ENCODE measurements at regions of chr7 and their contacts with region 1.

Region 1: DNA sequence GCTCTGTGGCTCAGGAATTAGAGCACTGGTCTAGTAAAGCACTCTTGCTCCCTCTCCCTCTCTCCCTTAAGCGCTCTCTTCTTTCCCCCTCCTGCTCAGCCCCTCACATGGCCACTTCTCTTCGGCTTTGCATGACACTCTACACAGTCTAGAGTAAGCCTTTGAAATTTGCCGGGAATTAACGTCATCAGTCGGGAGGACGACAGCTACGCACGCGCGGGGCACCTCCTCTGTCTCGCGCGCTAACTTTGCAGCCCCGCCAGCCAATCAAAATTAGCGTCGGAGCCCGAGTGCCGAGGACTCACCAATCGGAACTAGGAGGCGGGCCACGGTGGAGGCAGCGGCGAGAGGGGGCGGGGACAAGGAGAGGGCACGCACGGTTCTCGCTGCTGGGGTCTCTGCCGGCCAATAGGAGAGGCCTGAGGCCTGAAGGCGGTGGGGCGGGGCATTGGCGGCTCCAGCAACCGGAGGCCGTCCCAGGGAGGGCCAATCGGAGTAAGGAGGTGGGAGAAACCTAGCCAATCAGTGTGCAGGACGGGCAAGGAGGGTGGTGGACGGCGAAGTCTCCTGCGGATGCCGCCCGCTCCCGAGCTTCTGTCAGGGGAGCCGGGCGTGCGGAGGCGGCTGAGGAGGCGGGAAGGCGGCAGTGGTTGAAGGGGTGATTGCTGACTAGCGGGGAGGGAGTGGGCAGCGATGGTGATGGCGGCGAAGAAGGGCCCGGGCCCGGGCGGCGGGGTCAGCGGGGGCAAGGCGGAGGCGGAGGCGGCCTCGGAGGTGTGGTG is at the start of gene AGFG2:
- DNase-seq: peak; percentile 100
- H3K4me3 Mint-ChIP-seq: peak within 1 kb of the TSS; percentile 98
- H3K27ac Mint-ChIP-seq: peak within 1 kb of the TSS; percentile 85
- H3K4me1 Mint-ChIP-seq: peaks cover 44% of the 10 kb centered on the region
- H3K27me3 Mint-ChIP-seq: no peaks in the 10 kb centered on the region
- total RNA-seq, gene AGFG2: 113 and 124 TPM in 2 replicates

Region 2: GRCh38 chr7:100509231-100509630 is 29.6 kb before region 1 on chr7:
- intact Hi-C with region 1: no loop called
- DNase-seq: no peak
- H3K4me3 Mint-ChIP-seq: no peak overlapping the region
- H3K27ac Mint-ChIP-seq: no peak overlapping the region
- H3K4me1 Mint-ChIP-seq: no peaks in the 10 kb centered on the region
- H3K27me3 Mint-ChIP-seq: peaks cover 6% of the 10 kb centered on the region

Region 3: GRCh38 chr7:100604028-100604975 is 65.5 kb after region 1 on chr7:
- intact Hi-C with region 1: loop called (anchors 1 kb)
- DNase-seq: peak; percentile 61
- H3K4me3 Mint-ChIP-seq: peak overlapping the region; percentile 81
- H3K27ac Mint-ChIP-seq: peak overlapping the region; percentile 84
- H3K4me1 Mint-ChIP-seq: peaks cover 15% of the 10 kb centered on the region
- H3K27me3 Mint-ChIP-seq: peaks cover 13% of the 10 kb centered on the region

Measured in activated T-helper 1 cell treated with anti-CD3 and anti-CD28 coated beads, Interleukin-12 subunit alpha, Interleukin-12 subunit beta, Interleukin-2, Interleukin-4 antibody, amounts not matched to agents 30 ng/mL and 10 ng/mL and 1 ng/mL, durations not matched to agents 14 hours and 24 hours and 36 hours (primary cell).